OCI-LY7 (cell line): ENCODE measurements at regions of chr10 and their contacts with region 1.

Region 1: GRCh38 chr10:45000752-45001380 is at the start of gene ZNF22:
- DNase-seq: peak; percentile 85
- H3K4me3 ChIP-seq: peak within 1 kb of the TSS; percentile 86
- H3K27ac ChIP-seq: peak within 1 kb of the TSS; percentile 52
- H3K4me1 ChIP-seq: peaks cover 33% of the 10 kb centered on the region
- CTCF ChIP-seq: no peak
- total RNA-seq, gene ZNF22: 46.6 and 50.6 TPM in 2 replicates

Region 2: GRCh38 chr10:44959247-44960087 is 41.4 kb before region 1 on chr10 and contains the start of gene RASSF4:
- CTCF ChIA-PET with region 1: interaction called, 3 read pairs
- POLR2A ChIA-PET with region 1: interaction called, 9 read pairs
- intact Hi-C with region 1: loop called (anchors 2 kb)
- DNase-seq: peak; percentile 92
- H3K4me3 ChIP-seq: peak within 1 kb of the TSS; percentile 82
- H3K27ac ChIP-seq: no peak within 1 kb of the TSS
- H3K4me1 ChIP-seq: peaks cover 45% of the 10 kb centered on the region
- CTCF ChIP-seq: no peak
- total RNA-seq, gene RASSF4: 1.9 and 2.6 TPM in 2 replicates